ENCODE measurements at regions of chr15 and their contacts with region 1.

Region 1: DNA sequence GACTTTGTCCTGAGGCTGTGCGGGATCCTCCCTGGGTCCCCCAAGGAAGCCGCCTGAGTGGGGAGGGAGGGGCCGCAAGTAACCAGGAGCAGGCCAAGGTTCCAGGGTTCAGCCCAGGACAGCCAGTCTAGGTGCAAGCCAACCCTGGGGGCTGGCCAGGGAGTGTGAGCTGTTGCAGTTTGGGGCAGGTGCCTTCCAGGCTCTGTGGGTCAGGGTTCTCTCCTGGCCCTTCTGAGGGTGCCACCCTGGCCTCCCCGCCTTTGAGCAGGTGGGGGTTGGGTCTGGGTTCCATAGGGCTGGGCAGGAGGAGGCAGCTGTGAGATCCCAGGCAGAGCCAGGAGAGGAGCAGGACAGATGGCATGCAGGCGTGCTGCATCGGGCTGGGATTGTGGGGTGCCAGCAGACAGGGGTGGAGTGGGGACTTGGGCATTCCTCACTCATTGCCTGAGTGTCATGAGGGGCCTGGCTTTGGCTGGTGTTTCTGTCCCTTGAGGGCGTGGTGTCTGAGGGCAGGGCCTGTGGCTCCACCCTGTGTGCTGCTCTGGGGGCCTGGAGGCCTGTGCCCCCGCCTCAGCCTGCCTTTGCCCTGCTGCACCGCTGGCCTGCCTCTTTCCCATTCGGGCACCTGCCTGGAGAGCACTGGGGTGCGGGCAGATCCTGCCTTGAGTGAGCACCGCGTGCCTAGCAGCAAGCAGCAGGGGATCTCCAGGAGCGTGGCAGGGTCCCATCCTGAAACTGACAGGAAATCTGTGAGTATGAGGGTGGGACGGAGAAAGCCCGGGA is 18.4 kb downstream of the KLF13 start:
- DNase-seq: no peak
- ATAC-seq: peak; percentile 68
- H3K4me3 ChIP-seq: peak overlapping the region; percentile 80
- H3K27ac ChIP-seq: peak overlapping the region; percentile 96
- H3K4me1 ChIP-seq: peaks cover 87% of the 10 kb centered on the region
- H3K27me3 ChIP-seq: no peaks in the 10 kb centered on the region
- CTCF ChIP-seq: no peak
- EP300 ChIP-seq: no peak
- POLR2A ChIP-seq: peak; percentile 65
- RAD21 ChIP-seq: no peak

Region 2: DNA sequence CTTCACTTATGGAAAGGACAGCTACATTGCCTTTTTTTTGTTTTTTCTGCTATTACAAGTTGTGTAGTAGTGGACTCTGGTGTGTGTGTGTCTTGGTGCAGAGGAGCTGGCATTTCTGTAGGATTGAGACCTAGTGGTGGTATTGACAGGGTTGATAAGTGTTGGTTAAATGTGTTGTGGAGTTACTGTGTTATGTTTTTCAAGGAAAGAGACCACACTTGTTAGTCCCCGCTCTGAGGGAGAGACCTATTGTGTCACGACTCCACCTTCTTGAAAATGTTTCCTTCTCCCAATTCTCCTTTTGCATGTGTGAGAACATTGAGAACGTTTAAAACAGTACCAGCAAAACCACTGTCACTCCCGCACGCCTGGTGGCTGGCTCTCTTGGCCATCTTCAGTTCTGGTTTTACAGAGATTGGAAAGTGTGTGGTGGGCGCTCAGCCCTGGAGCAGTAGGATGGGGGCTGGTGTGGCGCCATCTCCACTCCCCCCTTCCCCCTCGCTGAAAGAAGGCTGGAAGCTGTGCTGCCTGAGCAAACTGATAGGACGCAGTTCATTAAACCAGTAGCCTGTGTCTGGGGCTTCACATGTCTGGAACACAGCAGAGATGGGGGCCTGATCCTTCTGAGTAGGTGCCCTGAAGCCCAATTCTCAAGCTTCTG is 12.9 kb before region 1 on chr15:
- CTCF ChIA-PET with region 1: interaction called, 10 read pairs
- POLR2A ChIA-PET with region 1: interaction called, 8 read pairs
- RAD21 ChIA-PET with region 1: interaction called, 19 read pairs
- SMC1A ChIA-PET with region 1: interaction called, 12 read pairs
- in situ Hi-C with region 1: no loop called
- intact Hi-C with region 1: loop called (anchors 2 kb)
- DNase-seq: no peak
- ATAC-seq: no peak
- H3K4me3 ChIP-seq: peak overlapping the region; percentile 91
- H3K27ac ChIP-seq: peak overlapping the region; percentile 62
- H3K4me1 ChIP-seq: peaks cover 63% of the 10 kb centered on the region
- H3K27me3 ChIP-seq: no peaks in the 10 kb centered on the region
- CTCF ChIP-seq: no peak
- EP300 ChIP-seq: no peak
- POLR2A ChIP-seq: no peak
- RAD21 ChIP-seq: no peak

Measured in GM12878 (cell line).